A549 (cell line): ENCODE measurements at regions of chr9 and their contacts with region 1.

Region 1: GRCh38 chr9:15277400-15278090 is 29.5 kb downstream of the TTC39B start:
- DNase-seq: peak in 1 of 2 experiments; percentile 22
- ATAC-seq: peak; percentile 56 to 78; a peak in 3 of 6 replicates
- H3K4me3 ChIP-seq: no peak overlapping the region
- H3K27ac ChIP-seq: no peak overlapping the region
- H3K4me1 ChIP-seq: no peaks in the 10 kb centered on the region
- CTCF ChIP-seq: peak; percentile 67
- EP300 ChIP-seq: no peak
- POLR2A ChIP-seq: no peak
- RAD21 ChIP-seq: peak; percentile 66 to 68

Region 2: GRCh38 chr9:15298362-15298761 is 20.8 kb after region 1 on chr9:
- CTCF ChIA-PET with region 1: no interaction called
- POLR2A ChIA-PET with region 1: no interaction called
- DNase-seq: no peak
- ATAC-seq: no peak
- H3K4me3 ChIP-seq: no peak overlapping the region
- H3K27ac ChIP-seq: no peak overlapping the region
- H3K4me1 ChIP-seq: peaks cover 10% of the 10 kb centered on the region
- CTCF ChIP-seq: no peak
- EP300 ChIP-seq: no peak
- POLR2A ChIP-seq: no peak
- RAD21 ChIP-seq: no peak

Region 3: DNA sequence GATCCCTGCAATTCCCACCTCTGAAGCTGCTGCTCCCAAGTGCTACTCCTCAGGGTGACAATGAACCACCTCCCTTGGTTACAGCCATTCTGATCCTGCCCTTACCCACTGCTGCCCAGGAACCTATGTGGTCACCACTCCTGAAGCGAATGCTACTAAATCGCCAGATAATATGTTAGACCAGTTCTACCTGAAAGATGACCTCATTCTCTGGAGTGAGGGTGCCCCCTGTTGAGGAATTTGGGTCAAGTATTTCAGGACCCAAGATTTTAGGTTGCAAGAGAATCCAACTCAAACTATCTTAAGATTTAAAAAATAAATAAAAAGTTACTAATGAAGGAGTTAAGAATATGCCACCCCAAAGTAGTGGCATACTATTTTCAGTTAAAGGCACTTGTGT is 139.3 kb after region 1 on chr9:
- CTCF ChIA-PET with region 1: interaction called, 10 read pairs
- POLR2A ChIA-PET with region 1: no interaction called
- DNase-seq: peak in 1 of 2 experiments; percentile 52
- ATAC-seq: peak; percentile 54 to 77; a peak in 4 of 6 replicates
- H3K4me3 ChIP-seq: no peak overlapping the region
- H3K27ac ChIP-seq: no peak overlapping the region
- H3K4me1 ChIP-seq: peaks cover 3% of the 10 kb centered on the region
- CTCF ChIP-seq: peak; percentile 62
- EP300 ChIP-seq: no peak
- POLR2A ChIP-seq: no peak
- RAD21 ChIP-seq: peak; percentile 75 to 79

Region 4: GRCh38 chr9:15444142-15444541 is 166.6 kb after region 1 on chr9:
- CTCF ChIA-PET with region 1: no interaction called
- POLR2A ChIA-PET with region 1: no interaction called
- DNase-seq: no peak
- ATAC-seq: no peak
- H3K4me3 ChIP-seq: no peak overlapping the region
- H3K27ac ChIP-seq: no peak overlapping the region
- H3K4me1 ChIP-seq: peaks cover 8% of the 10 kb centered on the region; the same call in 2 of the 3 replicates
- CTCF ChIP-seq: no peak
- EP300 ChIP-seq: no peak
- POLR2A ChIP-seq: no peak
- RAD21 ChIP-seq: no peak